Thyroid gland (tissue), 4 donors: ENCODE measurements at regions of chr11 and their contacts with region 1.

Region 1: GRCh38 chr11:57249384-57250319 is 12.6 kb upstream of the APLNR start:
- DNase-seq: peak; percentile 66
- H3K4me3 ChIP-seq: no peak overlapping the region
- H3K27ac ChIP-seq: no peak overlapping the region
- H3K4me1 ChIP-seq: peaks cover 0 to 8% of the 10 kb centered on the region in 2 donors
- H3K27me3 ChIP-seq: no peaks in the 10 kb centered on the region
- CTCF ChIP-seq: peak; percentile 59 to 89 (median 76)
- POLR2A ChIP-seq: no peak

Region 2: DNA sequence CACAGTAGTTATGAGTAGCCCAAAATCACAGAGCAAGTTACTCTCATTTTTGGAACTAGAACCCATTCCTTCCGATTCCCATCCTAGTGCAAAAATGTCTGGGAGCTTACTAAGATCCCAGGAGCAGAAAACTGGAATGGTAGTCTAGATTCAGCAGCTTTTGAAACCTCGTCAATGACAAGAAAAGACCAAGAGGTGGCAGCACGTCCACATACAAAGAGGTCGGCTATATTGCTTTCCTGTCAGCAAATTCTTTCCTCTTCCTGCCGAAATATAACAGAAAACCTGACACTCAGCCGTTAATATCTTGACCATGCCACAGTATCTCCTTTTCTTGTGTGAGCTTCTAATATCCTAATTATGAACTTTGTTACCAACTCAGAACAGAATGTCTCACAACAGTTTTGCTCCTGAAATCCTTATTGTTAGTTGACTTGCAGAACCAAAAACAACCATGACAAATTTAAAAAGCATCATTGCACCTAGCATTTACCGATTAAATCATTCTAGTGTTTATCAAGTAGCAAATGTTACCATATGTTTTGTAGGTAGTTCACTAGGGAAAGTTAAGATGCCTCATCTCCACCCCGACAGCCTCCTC is 408.3 kb before region 1 on chr11:
- intact Hi-C with region 1: loop called (anchors 2 kb)
- DNase-seq: peak; percentile 43 to 57
- H3K4me3 ChIP-seq: no peak overlapping the region
- H3K27ac ChIP-seq: no peak overlapping the region
- H3K4me1 ChIP-seq: no peaks in the 10 kb centered on the region
- H3K27me3 ChIP-seq: no peaks in the 10 kb centered on the region
- CTCF ChIP-seq: peak in 5 of 6 experiments; percentile 48 to 82 (median 74)
- POLR2A ChIP-seq: no peak

Region 3: GRCh38 chr11:57116654-57117053 is 133.0 kb before region 1 on chr11:
- intact Hi-C with region 1: loop called (anchors 5 kb)
- DNase-seq: peak; percentile 14 to 29
- H3K4me3 ChIP-seq: no peak overlapping the region
- H3K27ac ChIP-seq: no peak overlapping the region
- H3K4me1 ChIP-seq: no peaks in the 10 kb centered on the region
- H3K27me3 ChIP-seq: no peaks in the 10 kb centered on the region
- CTCF ChIP-seq: peak in 4 of 6 experiments; percentile 8 to 47 (median 42)
- POLR2A ChIP-seq: no peak

Region 4: DNA sequence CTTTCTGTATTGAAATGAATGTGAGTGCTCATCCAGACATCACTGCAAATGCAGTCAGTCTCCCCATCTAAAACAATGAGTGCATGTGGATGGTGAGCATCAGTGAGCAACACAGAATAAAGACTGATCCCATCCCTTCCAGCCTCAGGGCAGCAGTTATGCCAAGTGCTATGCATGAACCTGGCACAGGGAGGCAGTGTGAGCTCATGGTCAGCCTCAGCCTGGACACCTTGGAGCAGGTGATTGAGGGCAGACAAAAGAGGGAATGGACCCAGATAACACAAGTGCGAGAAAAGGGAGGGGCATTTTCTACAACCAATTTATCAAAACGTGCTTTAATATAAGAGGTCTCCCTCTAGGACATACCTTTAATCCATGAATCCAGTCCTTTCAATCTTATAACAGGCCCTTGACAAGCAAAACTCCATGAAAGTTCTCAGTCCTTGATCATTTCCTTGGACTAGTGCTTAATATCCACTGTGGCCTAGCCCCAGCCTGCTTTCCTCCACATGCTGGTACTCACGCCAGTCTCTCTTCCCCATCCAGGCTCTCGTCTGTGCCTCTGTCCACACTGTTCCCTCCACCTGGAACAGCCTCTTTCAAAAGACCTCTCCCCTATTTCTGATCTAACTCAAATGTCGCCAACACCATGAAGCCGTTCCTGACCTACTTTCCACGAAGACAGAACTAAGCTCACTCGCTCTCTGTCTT is 118.4 kb before region 1 on chr11:
- intact Hi-C with region 1: loop called (anchors 5 kb)
- DNase-seq: peak; percentile 49 to 62
- H3K4me3 ChIP-seq: no peak overlapping the region
- H3K27ac ChIP-seq: no peak overlapping the region
- H3K4me1 ChIP-seq: no peaks in the 10 kb centered on the region
- H3K27me3 ChIP-seq: no peaks in the 10 kb centered on the region
- CTCF ChIP-seq: peak in 5 of 6 experiments; percentile 24 to 85 (median 62)
- POLR2A ChIP-seq: no peak